ENCODE measurements at regions of chr6 and their contacts with region 1.

Region 1: DNA sequence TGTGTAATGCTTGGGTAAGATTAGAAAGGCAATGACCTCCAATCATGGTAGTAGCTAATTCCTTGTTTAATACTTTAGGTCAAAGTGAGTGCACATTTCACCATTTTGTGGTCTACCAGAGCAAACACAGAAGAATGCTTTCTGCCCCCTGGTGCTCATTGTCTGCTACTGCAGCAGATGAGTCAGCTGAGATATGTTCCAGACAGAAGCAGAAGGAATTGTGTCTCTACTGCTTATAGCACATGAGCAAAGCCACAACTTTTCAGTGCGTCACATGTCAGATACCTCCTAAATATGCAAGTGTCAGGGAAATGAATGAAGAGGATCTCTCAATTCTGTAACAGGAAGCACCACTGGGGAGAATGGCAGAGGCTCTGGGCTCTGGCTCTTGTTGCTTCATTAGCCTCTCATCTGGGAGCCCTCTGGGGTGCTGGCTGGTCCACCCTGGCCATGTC is 308.9 kb downstream of the ALDH8A1 start:
- DNase-seq: peak; percentile 82 to 92 (median 89)
- H3K4me3 ChIP-seq: no peak overlapping the region
- H3K27ac ChIP-seq: no peak overlapping the region
- H3K4me1 ChIP-seq: peaks cover 0 to 12% (median 1%) of the 10 kb centered on the region in 4 experiments
- H3K27me3 ChIP-seq: peaks cover 0 to 5% (median 0%) of the 10 kb centered on the region in 5 experiments

Region 2: GRCh38 chr6:134174672-134175198 is 466.3 kb before region 1 on chr6:
- CTCF ChIA-PET with region 1: interaction called, 36 read pairs
- POLR2A ChIA-PET with region 1: no interaction called
- DNase-seq: peak; percentile 76 to 86 (median 86)
- H3K4me3 ChIP-seq: peak overlapping the region; percentile 45 to 97 (median 76)
- H3K27ac ChIP-seq: peak overlapping the region in 1 of 2 experiments; percentile 63
- H3K4me1 ChIP-seq: peaks cover 31 to 60% (median 45%) of the 10 kb centered on the region in 4 experiments
- H3K27me3 ChIP-seq: peaks cover 0 to 26% (median 11%) of the 10 kb centered on the region in 5 experiments

Region 3: DNA sequence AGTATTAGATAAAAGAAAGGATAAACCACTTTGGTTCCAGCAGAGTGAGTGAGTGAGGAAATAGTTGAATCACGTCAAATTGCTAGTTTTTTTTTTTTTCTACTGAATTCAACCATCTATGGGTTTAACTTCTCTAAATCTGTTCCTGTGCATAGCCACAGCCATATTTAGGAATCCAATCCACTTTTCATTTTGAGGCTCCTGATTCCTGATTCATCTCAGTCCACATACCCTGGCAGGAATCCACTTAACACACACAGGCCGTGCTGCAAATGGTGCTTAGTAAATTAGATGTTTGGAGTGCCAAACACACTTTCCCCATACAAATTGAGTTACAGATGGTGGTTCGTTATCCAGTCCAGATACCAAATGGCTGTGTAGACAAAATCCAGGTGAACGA is 88.6 kb after region 1 on chr6:
- CTCF ChIA-PET with region 1: no interaction called
- POLR2A ChIA-PET with region 1: no interaction called
- DNase-seq: no peak
- H3K4me3 ChIP-seq: no peak overlapping the region
- H3K27ac ChIP-seq: no peak overlapping the region
- H3K4me1 ChIP-seq: peaks cover under 1 to 6% (median 4%) of the 10 kb centered on the region in 4 experiments
- H3K27me3 ChIP-seq: no peaks in the 10 kb centered on the region